Heart right ventricle (tissue), 16 donors: ENCODE measurements at regions of chr3 and their contacts with region 1.

Region 1: GRCh38 chr3:40524568-40525285 is at the start of gene ZNF621:
- DNase-seq: peak; percentile 92 to 94
- ATAC-seq: peak; percentile 100
- H3K4me3 ChIP-seq: peak within 1 kb of the TSS; percentile 62 to 97 (median 78)
- H3K27ac ChIP-seq: peak within 1 kb of the TSS; percentile 57 to 96 (median 90)
- H3K4me1 ChIP-seq: peaks cover 0 to 22% (median 12%) of the 10 kb centered on the region in 9 donors
- H3K27me3 ChIP-seq: no peaks in the 10 kb centered on the region
- CTCF ChIP-seq: peak in 2 of 9 donors; percentile 14 to 20
- total RNA-seq, gene ZNF621: 8.9 to 14.6 (median 10.5) TPM

Region 2: GRCh38 chr3:40278791-40279190 is 245.9 kb before region 1 on chr3:
- intact Hi-C with region 1: no loop called
- DNase-seq: no peak
- ATAC-seq: no peak
- H3K4me3 ChIP-seq: no peak overlapping the region
- H3K27ac ChIP-seq: no peak overlapping the region
- H3K4me1 ChIP-seq: peaks cover 0 to 11% (median 0%) of the 10 kb centered on the region in 9 donors
- H3K27me3 ChIP-seq: no peaks in the 10 kb centered on the region
- CTCF ChIP-seq: no peak

Region 3: GRCh38 chr3:40476478-40477470 is 48.0 kb before region 1 on chr3 and contains the start of gene ZNF619:
- intact Hi-C with region 1: loop called in 4 of 10 experiments (anchors 2 to 10 kb)
- DNase-seq: peak; percentile 76 to 82
- ATAC-seq: peak; percentile 91 to 97 (median 96)
- H3K4me3 ChIP-seq: peak within 1 kb of the TSS; percentile 71 to 94 (median 84)
- H3K27ac ChIP-seq: peak within 1 kb of the TSS in 9 of 10 donors; percentile 69 to 92 (median 78)
- H3K4me1 ChIP-seq: peaks cover 0 to 17% (median 11%) of the 10 kb centered on the region in 9 donors
- H3K27me3 ChIP-seq: no peaks in the 10 kb centered on the region
- CTCF ChIP-seq: no peak
- total RNA-seq, gene ZNF619: 3.0 to 6.1 (median 5.0) TPM

Region 4: DNA sequence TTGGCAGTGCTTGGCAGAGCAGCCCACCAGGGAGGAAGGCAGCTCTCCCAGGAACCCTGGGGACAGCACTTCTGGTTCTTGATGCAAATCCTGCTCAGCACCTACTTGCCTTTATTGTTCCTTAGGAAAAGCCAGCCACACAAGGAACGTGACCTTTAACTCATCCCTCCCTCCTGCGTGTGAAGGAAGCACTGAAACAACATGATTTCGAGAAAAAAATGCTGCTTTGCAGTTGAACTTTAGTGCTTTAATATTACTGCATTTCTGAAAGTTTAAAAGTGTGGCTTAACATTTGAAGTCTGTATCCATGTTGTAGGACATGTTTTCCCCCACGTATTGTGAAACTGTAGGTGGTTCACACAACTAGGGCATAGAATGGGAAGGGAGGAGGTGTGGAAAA is 624.2 kb after region 1 on chr3:
- intact Hi-C with region 1: no loop called
- DNase-seq: no peak
- ATAC-seq: no peak
- H3K4me3 ChIP-seq: no peak overlapping the region
- H3K27ac ChIP-seq: no peak overlapping the region
- H3K4me1 ChIP-seq: no peaks in the 10 kb centered on the region
- H3K27me3 ChIP-seq: no peaks in the 10 kb centered on the region
- CTCF ChIP-seq: no peak